ENCODE measurements at regions of chr14 and their contacts with region 1.

Region 1: DNA sequence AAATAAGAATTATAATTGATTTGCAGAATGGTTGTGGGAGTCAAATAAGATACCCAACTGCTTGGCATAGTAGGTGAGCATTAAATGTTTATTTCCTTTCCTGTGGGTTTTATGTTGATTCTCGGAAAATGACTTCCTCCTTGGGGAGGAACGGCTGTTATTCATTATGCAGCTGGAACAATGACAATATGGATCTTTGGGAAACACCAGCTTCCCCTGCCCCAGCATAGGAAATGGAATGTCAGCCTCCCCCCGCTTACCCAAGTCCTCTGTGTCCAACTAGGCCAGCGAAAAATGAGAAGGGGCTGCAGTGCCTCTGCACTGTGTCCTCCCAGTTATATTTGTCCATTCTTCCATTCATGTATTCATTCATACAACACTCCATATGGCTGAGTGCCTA is 11.7 kb upstream of the CCDC177 start:
- DNase-seq: no peak
- H3K4me3 ChIP-seq: no peak overlapping the region
- H3K27ac ChIP-seq: no peak overlapping the region
- H3K4me1 ChIP-seq: no peaks in the 10 kb centered on the region; a peak in 1 of 4 replicates
- H3K27me3 ChIP-seq: no peaks in the 10 kb centered on the region
- CTCF ChIP-seq: no peak
- EP300 ChIP-seq: no peak
- RAD21 ChIP-seq: no peak

Region 2: DNA sequence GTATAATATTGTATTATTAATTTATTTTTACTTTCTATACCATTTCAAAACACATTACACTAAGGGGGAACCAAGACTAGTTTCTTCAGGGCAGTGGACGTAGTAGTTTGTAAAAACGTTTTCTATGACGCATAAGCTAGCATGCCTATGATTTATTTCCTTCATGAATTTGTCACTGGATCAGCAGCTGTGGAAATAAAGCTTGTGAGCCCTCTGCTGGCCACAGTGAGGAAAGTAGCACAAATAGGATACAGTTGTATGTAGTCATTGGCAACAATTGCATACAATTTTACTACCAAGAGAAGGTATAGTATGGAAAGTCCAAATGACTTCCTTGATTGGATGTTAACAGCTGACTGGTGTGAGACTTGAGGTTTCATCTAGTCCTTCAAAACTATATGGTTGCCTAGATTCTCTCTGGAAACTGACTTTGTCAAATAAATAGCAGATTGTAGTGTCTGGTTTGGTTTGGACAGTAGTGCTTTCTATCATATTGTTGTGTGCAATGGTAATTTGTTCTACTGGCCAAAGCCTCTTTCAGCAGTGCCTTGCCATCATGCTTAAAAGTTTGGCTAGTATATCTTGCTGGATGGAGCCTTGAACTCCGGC is 126.2 kb before region 1 on chr14:
- CTCF ChIA-PET with region 1: no interaction called
- POLR2A ChIA-PET with region 1: no interaction called
- DNase-seq: peak; percentile 70
- H3K4me3 ChIP-seq: no peak overlapping the region; a peak in 1 of 4 replicates
- H3K27ac ChIP-seq: peak overlapping the region in 1 of 2 experiments; percentile 47; a peak in 1 of 4 replicates
- H3K4me1 ChIP-seq: peaks cover 0 to 6% of the 10 kb centered on the region in 2 experiments; a peak in 1 of 4 replicates
- H3K27me3 ChIP-seq: no peaks in the 10 kb centered on the region
- CTCF ChIP-seq: peak; percentile 87
- EP300 ChIP-seq: no peak
- RAD21 ChIP-seq: peak; percentile 84

Region 3: GRCh38 chr14:69611201-69612011 is 25.0 kb after region 1 on chr14 and contains the start of gene SUSD6:
- CTCF ChIA-PET with region 1: interaction called, 40 read pairs
- POLR2A ChIA-PET with region 1: no interaction called
- DNase-seq: peak; percentile 98
- H3K4me3 ChIP-seq: peak within 1 kb of the TSS; percentile 81 to 82
- H3K27ac ChIP-seq: peak within 1 kb of the TSS; percentile 64 to 89
- H3K4me1 ChIP-seq: peaks cover 3 to 31% of the 10 kb centered on the region in 2 experiments; a peak in 3 of 4 replicates
- H3K27me3 ChIP-seq: no peaks in the 10 kb centered on the region
- CTCF ChIP-seq: no peak
- EP300 ChIP-seq: no peak
- RAD21 ChIP-seq: no peak
- polyA plus RNA-seq, gene SUSD6: 8.5 and 9.5 TPM in 2 replicates

Region 4: DNA sequence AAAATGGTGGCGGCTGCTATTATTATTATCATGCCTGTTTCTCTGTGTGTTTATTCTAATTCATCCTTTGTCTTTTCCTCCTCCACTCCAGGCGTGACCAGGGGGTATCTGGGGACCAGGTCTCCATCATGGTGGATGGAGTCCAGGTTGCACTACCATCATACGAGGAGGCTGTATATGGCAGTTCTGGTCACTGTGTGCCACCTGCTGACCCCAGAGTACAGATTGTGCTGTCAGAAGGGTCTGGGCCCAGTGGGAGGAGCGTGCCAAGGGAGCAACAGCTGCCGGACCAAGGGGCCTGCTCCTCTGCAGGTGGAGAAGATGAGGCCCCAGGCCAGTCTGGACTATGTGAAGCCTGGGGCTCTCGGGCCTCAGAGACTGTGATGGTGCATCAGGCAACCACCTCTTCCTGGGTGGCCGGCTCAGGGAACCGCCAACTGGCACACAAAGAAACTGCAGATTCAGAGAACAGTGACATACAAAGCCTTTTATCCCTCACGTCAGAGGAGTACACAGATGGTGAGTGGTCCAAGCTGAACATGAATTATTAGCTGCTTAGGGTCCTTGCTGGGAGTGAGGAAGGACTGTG is 122.3 kb after region 1 on chr14:
- CTCF ChIA-PET with region 1: interaction called, 14 read pairs
- POLR2A ChIA-PET with region 1: no interaction called
- DNase-seq: peak; percentile 51
- H3K4me3 ChIP-seq: no peak overlapping the region; a peak in 1 of 4 replicates
- H3K27ac ChIP-seq: peak overlapping the region in 1 of 2 experiments; percentile 14; a peak in 1 of 4 replicates
- H3K4me1 ChIP-seq: peaks cover 13 to 32% of the 10 kb centered on the region in 2 experiments; a peak in 2 of 4 replicates
- H3K27me3 ChIP-seq: no peaks in the 10 kb centered on the region
- CTCF ChIP-seq: peak; percentile 28; the same call in 1 of the 2 replicates
- EP300 ChIP-seq: no peak
- RAD21 ChIP-seq: peak; percentile 54

Region 5: GRCh38 chr14:69741055-69741454 is 154.7 kb after region 1 on chr14:
- CTCF ChIA-PET with region 1: interaction called, 14 read pairs
- POLR2A ChIA-PET with region 1: no interaction called
- DNase-seq: no peak
- H3K4me3 ChIP-seq: no peak overlapping the region
- H3K27ac ChIP-seq: no peak overlapping the region
- H3K4me1 ChIP-seq: no peaks in the 10 kb centered on the region
- H3K27me3 ChIP-seq: no peaks in the 10 kb centered on the region
- CTCF ChIP-seq: no peak
- EP300 ChIP-seq: no peak
- RAD21 ChIP-seq: no peak